Sigmoid colon (tissue), 7 donors: ENCODE measurements at regions of chr2 and their contacts with region 1.

Region 1: GRCh38 chr2:23760736-23761135 is 166.2 kb downstream of the ATAD2B start:
- DNase-seq: no peak
- H3K4me3 ChIP-seq: no peak overlapping the region
- H3K27ac ChIP-seq: no peak overlapping the region
- H3K4me1 ChIP-seq: peaks cover 0 to 4% (median 0%) of the 10 kb centered on the region in 4 donors
- H3K27me3 ChIP-seq: no peaks in the 10 kb centered on the region
- CTCF ChIP-seq: peak in 1 of 4 experiments; percentile 18
- EP300 ChIP-seq: no peak
- POLR2A ChIP-seq: no peak

Region 2: GRCh38 chr2:23092831-23093230 is 667.9 kb before region 1 on chr2:
- intact Hi-C with region 1: no loop called
- DNase-seq: no peak
- H3K4me3 ChIP-seq: no peak overlapping the region
- H3K27ac ChIP-seq: no peak overlapping the region
- H3K4me1 ChIP-seq: no peaks in the 10 kb centered on the region
- H3K27me3 ChIP-seq: no peaks in the 10 kb centered on the region
- CTCF ChIP-seq: no peak
- EP300 ChIP-seq: no peak
- POLR2A ChIP-seq: no peak

Region 3: GRCh38 chr2:23342075-23342474 is 418.7 kb before region 1 on chr2:
- intact Hi-C with region 1: no loop called
- DNase-seq: no peak
- H3K4me3 ChIP-seq: no peak overlapping the region
- H3K27ac ChIP-seq: no peak overlapping the region
- H3K4me1 ChIP-seq: peaks cover 0 to 3% (median 0%) of the 10 kb centered on the region in 4 donors
- H3K27me3 ChIP-seq: no peaks in the 10 kb centered on the region
- CTCF ChIP-seq: no peak
- EP300 ChIP-seq: no peak
- POLR2A ChIP-seq: no peak

Region 4: GRCh38 chr2:23366720-23367119 is 394.0 kb before region 1 on chr2:
- intact Hi-C with region 1: loop called (anchors 5 kb)
- DNase-seq: no peak
- H3K4me3 ChIP-seq: no peak overlapping the region
- H3K27ac ChIP-seq: no peak overlapping the region
- H3K4me1 ChIP-seq: peaks cover 0 to 6% (median 0%) of the 10 kb centered on the region in 4 donors
- H3K27me3 ChIP-seq: no peaks in the 10 kb centered on the region
- CTCF ChIP-seq: no peak
- EP300 ChIP-seq: no peak
- POLR2A ChIP-seq: no peak

Region 5: GRCh38 chr2:23532391-23533337 is 228.1 kb before region 1 on chr2:
- intact Hi-C with region 1: loop called (anchors 10 kb)
- DNase-seq: peak; percentile 83
- H3K4me3 ChIP-seq: peak overlapping the region; percentile 6 to 28 (median 13)
- H3K27ac ChIP-seq: peak overlapping the region; percentile 73 to 81 (median 78)
- H3K4me1 ChIP-seq: peaks cover 0 to 39% (median 30%) of the 10 kb centered on the region in 4 donors
- H3K27me3 ChIP-seq: no peaks in the 10 kb centered on the region
- CTCF ChIP-seq: no peak
- EP300 ChIP-seq: no peak
- POLR2A ChIP-seq: no peak

Region 6: GRCh38 chr2:23636426-23636825 is 124.3 kb before region 1 on chr2:
- intact Hi-C with region 1: loop called (anchors 5 kb)
- DNase-seq: no peak
- H3K4me3 ChIP-seq: no peak overlapping the region
- H3K27ac ChIP-seq: peak overlapping the region in 3 of 4 donors; percentile 40 to 73 (median 43)
- H3K4me1 ChIP-seq: peaks cover 0 to 19% (median 15%) of the 10 kb centered on the region in 4 donors
- H3K27me3 ChIP-seq: no peaks in the 10 kb centered on the region
- CTCF ChIP-seq: peak in 1 of 4 experiments; percentile 24
- EP300 ChIP-seq: no peak
- POLR2A ChIP-seq: no peak